MCF 10A (cell line): ENCODE measurements at regions of chr2 and their contacts with region 1.

Region 1: DNA sequence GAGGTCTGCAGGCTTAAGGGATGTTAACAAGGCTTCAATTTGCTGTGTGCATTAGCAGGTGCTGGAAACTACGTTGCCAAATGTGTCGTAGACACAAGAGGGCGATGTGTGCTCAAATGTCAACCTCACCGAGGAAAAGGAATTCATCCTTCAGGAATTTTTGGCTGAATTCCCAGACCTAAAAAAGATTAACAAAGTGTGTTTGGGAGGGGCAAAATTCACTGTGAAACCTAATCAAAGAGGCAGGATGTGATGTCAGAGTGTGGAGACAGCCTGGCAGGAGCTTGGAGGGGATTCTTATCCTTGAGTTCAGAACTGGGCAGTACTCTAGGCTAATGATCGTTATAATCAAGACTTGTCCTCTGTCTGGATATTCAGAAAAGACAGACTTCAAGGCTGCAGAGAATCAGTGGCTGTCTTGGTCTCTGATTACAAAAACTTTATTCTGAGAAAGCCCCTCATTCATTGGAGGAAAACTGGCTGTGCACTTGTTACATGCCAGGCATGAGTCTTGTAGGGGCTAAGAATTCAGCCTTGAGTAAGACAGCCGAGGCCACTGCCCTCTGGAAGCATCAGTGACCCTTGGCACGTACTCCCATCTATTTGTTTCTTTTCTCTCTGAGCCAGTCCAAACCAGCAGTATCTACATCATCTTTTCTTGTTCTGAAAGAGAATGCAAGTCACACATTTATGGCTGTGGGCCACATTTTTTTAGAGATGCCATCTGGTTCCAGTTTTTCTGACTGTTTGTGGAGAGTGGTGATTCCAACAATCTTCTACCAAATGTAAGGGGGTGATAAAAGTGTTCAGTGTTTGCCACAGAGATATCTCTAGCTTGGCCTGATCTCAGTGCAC is 18.7 kb upstream of the SCYGR1 start:
- DNase-seq: peak; percentile 98
- H3K4me3 Mint-ChIP-seq: peak overlapping the region; percentile 21
- H3K27ac Mint-ChIP-seq: peak overlapping the region; percentile 38
- H3K4me1 Mint-ChIP-seq: peaks cover 41% of the 10 kb centered on the region
- H3K27me3 Mint-ChIP-seq: no peaks in the 10 kb centered on the region
- CTCF ChIP-seq: peak; percentile 67

Region 2: GRCh38 chr2:227366769-227367426 is 39.5 kb before region 1 on chr2:
- CTCF ChIA-PET with region 1: no interaction called
- POLR2A ChIA-PET with region 1: no interaction called
- intact Hi-C with region 1: loop called (anchors 2 kb)
- DNase-seq: peak; percentile 93
- H3K4me3 Mint-ChIP-seq: no peak overlapping the region
- H3K27ac Mint-ChIP-seq: peak overlapping the region; percentile 65
- H3K4me1 Mint-ChIP-seq: peaks cover 5% of the 10 kb centered on the region
- H3K27me3 Mint-ChIP-seq: no peaks in the 10 kb centered on the region
- CTCF ChIP-seq: no peak

Region 3: GRCh38 chr2:227464361-227464760 is 58.0 kb after region 1 on chr2:
- CTCF ChIA-PET with region 1: interaction called, 20 read pairs
- POLR2A ChIA-PET with region 1: interaction called, 13 read pairs
- intact Hi-C with region 1: no loop called
- DNase-seq: no peak
- H3K4me3 Mint-ChIP-seq: no peak overlapping the region
- H3K27ac Mint-ChIP-seq: no peak overlapping the region
- H3K4me1 Mint-ChIP-seq: peaks cover 20% of the 10 kb centered on the region
- H3K27me3 Mint-ChIP-seq: no peaks in the 10 kb centered on the region
- CTCF ChIP-seq: no peak

Region 4: GRCh38 chr2:227497158-227497557 is 90.8 kb after region 1 on chr2:
- CTCF ChIA-PET with region 1: no interaction called
- POLR2A ChIA-PET with region 1: no interaction called
- intact Hi-C with region 1: no loop called
- DNase-seq: no peak
- H3K4me3 Mint-ChIP-seq: no peak overlapping the region
- H3K27ac Mint-ChIP-seq: no peak overlapping the region
- H3K4me1 Mint-ChIP-seq: peaks cover 10% of the 10 kb centered on the region
- H3K27me3 Mint-ChIP-seq: no peaks in the 10 kb centered on the region
- CTCF ChIP-seq: no peak

Region 5: GRCh38 chr2:227566012-227566411 is 159.6 kb after region 1 on chr2:
- CTCF ChIA-PET with region 1: interaction called, 3 read pairs
- POLR2A ChIA-PET with region 1: interaction called, 3 read pairs
- intact Hi-C with region 1: loop called (anchors 10 kb)
- DNase-seq: no peak
- H3K4me3 Mint-ChIP-seq: no peak overlapping the region
- H3K27ac Mint-ChIP-seq: no peak overlapping the region
- H3K4me1 Mint-ChIP-seq: no peaks in the 10 kb centered on the region
- H3K27me3 Mint-ChIP-seq: no peaks in the 10 kb centered on the region
- CTCF ChIP-seq: no peak

Region 6: GRCh38 chr2:227862227-227862740 is 455.9 kb after region 1 on chr2:
- CTCF ChIA-PET with region 1: interaction called, 4 read pairs
- POLR2A ChIA-PET with region 1: interaction called, 5 read pairs
- intact Hi-C with region 1: loop called (anchors 1 kb)
- DNase-seq: peak; percentile 80
- H3K4me3 Mint-ChIP-seq: peak overlapping the region; percentile 36
- H3K27ac Mint-ChIP-seq: peak overlapping the region; percentile 24
- H3K4me1 Mint-ChIP-seq: peaks cover 44% of the 10 kb centered on the region
- H3K27me3 Mint-ChIP-seq: no peaks in the 10 kb centered on the region
- CTCF ChIP-seq: peak; percentile 64